T-cell (primary cell): ENCODE measurements at regions of chr12 and their contacts with region 1.

Region 1: GRCh38 chr12:110816248-110816647 is 30.5 kb upstream of the CCDC63 start:
- DNase-seq: no peak
- ATAC-seq: no peak
- H3K4me3 ChIP-seq: no peak overlapping the region
- H3K4me3 Mint-ChIP-seq: no peak overlapping the region
- H3K27ac ChIP-seq: no peak overlapping the region
- H3K27ac Mint-ChIP-seq: no peak overlapping the region
- H3K4me1 ChIP-seq: no peaks in the 10 kb centered on the region
- H3K4me1 Mint-ChIP-seq: peaks cover 0 to 2% (median 0%) of the 10 kb centered on the region in 3 donors
- H3K27me3 ChIP-seq: peaks cover 0 to 5% of the 10 kb centered on the region in 2 experiments
- H3K27me3 Mint-ChIP-seq: peaks cover 0 to 5% of the 10 kb centered on the region in 2 donors

Region 2: GRCh38 chr12:110798461-110798860 is 17.8 kb before region 1 on chr12:
- CTCF ChIA-PET with region 1: no interaction called
- POLR2A ChIA-PET with region 1: no interaction called
- DNase-seq: no peak
- ATAC-seq: no peak
- H3K4me3 ChIP-seq: no peak overlapping the region
- H3K4me3 Mint-ChIP-seq: no peak overlapping the region
- H3K27ac ChIP-seq: no peak overlapping the region
- H3K27ac Mint-ChIP-seq: no peak overlapping the region
- H3K4me1 ChIP-seq: peaks cover 0 to 2% of the 10 kb centered on the region in 2 experiments
- H3K4me1 Mint-ChIP-seq: peaks cover 4 to 17% (median 7%) of the 10 kb centered on the region in 3 donors
- H3K27me3 ChIP-seq: peaks cover 0 to 3% of the 10 kb centered on the region in 2 experiments
- H3K27me3 Mint-ChIP-seq: no peaks in the 10 kb centered on the region

Region 3: DNA sequence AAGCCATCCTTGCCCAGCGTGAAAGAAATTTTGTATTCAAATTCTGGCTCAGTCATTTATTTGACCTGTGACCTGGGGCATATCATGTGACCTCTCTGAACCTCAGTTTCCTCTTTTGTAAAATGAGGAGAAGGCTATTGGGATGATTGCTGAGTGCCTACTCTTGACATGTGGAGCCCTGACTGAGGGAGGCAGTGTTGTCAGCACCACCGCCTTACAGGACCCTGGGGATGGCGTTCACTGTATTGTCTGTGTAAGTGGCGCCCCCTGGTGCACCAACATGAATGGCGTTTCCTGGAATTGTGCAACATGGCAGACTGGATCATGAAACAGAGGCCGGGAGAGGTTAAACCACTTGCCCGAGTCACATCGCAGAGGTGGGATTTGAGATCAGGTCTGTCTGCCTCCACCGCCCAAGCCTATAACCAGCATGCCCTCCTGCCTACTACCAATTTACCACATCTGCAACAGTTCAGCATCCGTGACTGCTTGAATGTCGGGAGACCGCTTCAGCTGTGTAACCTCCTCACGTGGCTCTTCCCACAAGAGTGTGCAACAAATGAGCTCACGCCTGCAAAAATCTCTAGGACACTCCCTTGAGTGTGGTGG is 10.4 kb after region 1 on chr12:
- CTCF ChIA-PET with region 1: interaction called, 3 to 6 read pairs
- POLR2A ChIA-PET with region 1: interaction called in 1 of 2 experiments, 12 read pairs
- DNase-seq: peak; percentile 50 to 87 (median 75)
- ATAC-seq: peak; percentile 87 to 99 (median 90)
- H3K4me3 ChIP-seq: peak overlapping the region in 1 of 2 donors; percentile 17
- H3K4me3 Mint-ChIP-seq: peak overlapping the region; percentile 11 to 65 (median 52)
- H3K27ac ChIP-seq: no peak overlapping the region
- H3K27ac Mint-ChIP-seq: peak overlapping the region in 1 of 2 donors; percentile 4
- H3K4me1 ChIP-seq: peaks cover 0 to 7% of the 10 kb centered on the region in 2 experiments
- H3K4me1 Mint-ChIP-seq: peaks cover 6% of the 10 kb centered on the region in 3 donors
- H3K27me3 ChIP-seq: peaks cover 0 to 21% of the 10 kb centered on the region in 2 experiments
- H3K27me3 Mint-ChIP-seq: peaks cover 4 to 10% of the 10 kb centered on the region in 2 donors

Region 4: DNA sequence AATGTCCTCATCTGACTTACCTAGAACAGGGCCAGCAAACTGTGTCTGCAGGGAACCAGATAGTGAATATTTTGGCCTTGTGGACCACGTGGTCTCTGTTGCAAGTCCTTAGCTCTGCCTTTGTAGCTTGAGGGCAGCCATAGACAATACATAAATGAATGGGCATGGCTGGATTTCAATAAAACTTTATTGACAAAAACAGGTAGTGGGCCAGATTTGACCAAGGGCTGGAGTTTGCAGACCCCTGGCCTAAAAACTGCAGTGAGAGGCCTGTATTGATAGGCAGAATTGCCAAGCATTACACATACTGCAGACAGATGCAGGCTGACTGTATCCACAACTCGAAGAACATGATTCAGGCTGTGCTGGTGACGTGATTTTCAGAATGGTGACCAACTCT is 55.8 kb after region 1 on chr12:
- CTCF ChIA-PET with region 1: no interaction called
- POLR2A ChIA-PET with region 1: interaction called in 1 of 2 experiments, 11 read pairs
- DNase-seq: no peak
- ATAC-seq: no peak
- H3K4me3 ChIP-seq: no peak overlapping the region
- H3K4me3 Mint-ChIP-seq: no peak overlapping the region
- H3K27ac ChIP-seq: no peak overlapping the region
- H3K27ac Mint-ChIP-seq: no peak overlapping the region
- H3K4me1 ChIP-seq: no peaks in the 10 kb centered on the region
- H3K4me1 Mint-ChIP-seq: no peaks in the 10 kb centered on the region
- H3K27me3 ChIP-seq: peaks cover 0 to under 1% of the 10 kb centered on the region in 2 experiments
- H3K27me3 Mint-ChIP-seq: peaks cover 8 to 11% of the 10 kb centered on the region in 2 donors

Region 5: GRCh38 chr12:111434680-111435338 is 618.6 kb after region 1 on chr12:
- CTCF ChIA-PET with region 1: no interaction called
- POLR2A ChIA-PET with region 1: no interaction called
- DNase-seq: peak; percentile 59 to 92 (median 88)
- ATAC-seq: peak; percentile 79 to 81 (median 80)
- H3K4me3 ChIP-seq: peak overlapping the region; percentile 42 to 49
- H3K4me3 Mint-ChIP-seq: peak overlapping the region; percentile 79 to 90 (median 82)
- H3K27ac ChIP-seq: peak overlapping the region; percentile 100
- H3K27ac Mint-ChIP-seq: peak overlapping the region; percentile 96 to 99
- H3K4me1 ChIP-seq: peaks cover 60 to 99% of the 10 kb centered on the region in 2 experiments
- H3K4me1 Mint-ChIP-seq: peaks cover 91 to 97% (median 95%) of the 10 kb centered on the region in 3 donors
- H3K27me3 ChIP-seq: no peaks in the 10 kb centered on the region
- H3K27me3 Mint-ChIP-seq: no peaks in the 10 kb centered on the region